HCT116 (cell line): ENCODE measurements at regions of chr18 and their contacts with region 1.

Region 1: GRCh38 chr18:47150029-47150823 is at the start of gene HDHD2:
- DNase-seq: peak; percentile 54
- ATAC-seq: peak; percentile 90
- H3K4me3 ChIP-seq: peak within 1 kb of the TSS; percentile 81 to 90
- H3K27ac ChIP-seq: peak within 1 kb of the TSS; percentile 69
- H3K4me1 ChIP-seq: peaks cover 8 to 16% of the 10 kb centered on the region in 2 experiments; a peak in 2 of 4 replicates
- H3K27me3 ChIP-seq: no peaks in the 10 kb centered on the region
- CTCF ChIP-seq: no peak
- POLR2A ChIP-seq: peak; percentile 85
- RAD21 ChIP-seq: no peak
- total RNA-seq, gene HDHD2: 29.1 TPM

Region 2: GRCh38 chr18:46859855-46860254 is 290.4 kb before region 1 on chr18:
- CTCF ChIA-PET with region 1: no interaction called
- POLR2A ChIA-PET with region 1: no interaction called
- RAD21 ChIA-PET with region 1: no interaction called
- intact Hi-C with region 1: no loop called
- DNase-seq: no peak
- ATAC-seq: no peak
- H3K4me3 ChIP-seq: no peak overlapping the region
- H3K27ac ChIP-seq: no peak overlapping the region
- H3K4me1 ChIP-seq: no peaks in the 10 kb centered on the region
- H3K27me3 ChIP-seq: no peaks in the 10 kb centered on the region
- CTCF ChIP-seq: no peak
- POLR2A ChIP-seq: no peak
- RAD21 ChIP-seq: no peak

Region 3: GRCh38 chr18:47658498-47658897 is 508.3 kb after region 1 on chr18:
- CTCF ChIA-PET with region 1: no interaction called
- POLR2A ChIA-PET with region 1: no interaction called
- RAD21 ChIA-PET with region 1: no interaction called
- intact Hi-C with region 1: no loop called
- DNase-seq: no peak
- ATAC-seq: no peak
- H3K4me3 ChIP-seq: no peak overlapping the region
- H3K27ac ChIP-seq: no peak overlapping the region
- H3K4me1 ChIP-seq: no peaks in the 10 kb centered on the region
- H3K27me3 ChIP-seq: peaks cover 2% of the 10 kb centered on the region; the same call in 1 of the 2 replicates
- CTCF ChIP-seq: 0 out of 6 replicates have a peak, but pooled peaks of 1 of the 3 experiments have one; percentile 12
- POLR2A ChIP-seq: no peak
- RAD21 ChIP-seq: no peak

Region 4: DNA sequence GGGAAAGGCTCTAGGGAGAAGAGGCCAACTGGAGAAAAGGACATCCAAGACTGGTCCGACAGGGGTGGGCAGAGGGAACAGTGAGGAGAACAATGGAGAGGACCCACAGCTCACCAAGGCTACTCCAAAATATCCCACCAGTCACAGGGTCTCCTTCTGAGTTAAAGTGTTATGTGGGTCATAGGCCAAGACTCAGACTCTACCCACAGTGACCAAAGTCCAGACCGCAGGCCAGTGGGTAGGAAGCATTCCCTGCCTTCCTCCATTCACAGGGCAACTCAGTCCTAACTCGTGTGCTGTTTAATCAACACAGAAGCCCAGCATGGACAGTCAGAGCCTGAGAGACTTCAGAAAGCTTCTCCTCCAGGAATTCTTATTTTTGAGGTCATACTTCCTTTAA is 519.6 kb after region 1 on chr18:
- CTCF ChIA-PET with region 1: no interaction called
- POLR2A ChIA-PET with region 1: no interaction called
- RAD21 ChIA-PET with region 1: no interaction called
- intact Hi-C with region 1: no loop called
- DNase-seq: no peak
- ATAC-seq: no peak
- H3K4me3 ChIP-seq: no peak overlapping the region
- H3K27ac ChIP-seq: no peak overlapping the region
- H3K4me1 ChIP-seq: no peaks in the 10 kb centered on the region
- H3K27me3 ChIP-seq: peaks cover 27% of the 10 kb centered on the region
- CTCF ChIP-seq: no peak
- POLR2A ChIP-seq: no peak
- RAD21 ChIP-seq: no peak

Region 5: DNA sequence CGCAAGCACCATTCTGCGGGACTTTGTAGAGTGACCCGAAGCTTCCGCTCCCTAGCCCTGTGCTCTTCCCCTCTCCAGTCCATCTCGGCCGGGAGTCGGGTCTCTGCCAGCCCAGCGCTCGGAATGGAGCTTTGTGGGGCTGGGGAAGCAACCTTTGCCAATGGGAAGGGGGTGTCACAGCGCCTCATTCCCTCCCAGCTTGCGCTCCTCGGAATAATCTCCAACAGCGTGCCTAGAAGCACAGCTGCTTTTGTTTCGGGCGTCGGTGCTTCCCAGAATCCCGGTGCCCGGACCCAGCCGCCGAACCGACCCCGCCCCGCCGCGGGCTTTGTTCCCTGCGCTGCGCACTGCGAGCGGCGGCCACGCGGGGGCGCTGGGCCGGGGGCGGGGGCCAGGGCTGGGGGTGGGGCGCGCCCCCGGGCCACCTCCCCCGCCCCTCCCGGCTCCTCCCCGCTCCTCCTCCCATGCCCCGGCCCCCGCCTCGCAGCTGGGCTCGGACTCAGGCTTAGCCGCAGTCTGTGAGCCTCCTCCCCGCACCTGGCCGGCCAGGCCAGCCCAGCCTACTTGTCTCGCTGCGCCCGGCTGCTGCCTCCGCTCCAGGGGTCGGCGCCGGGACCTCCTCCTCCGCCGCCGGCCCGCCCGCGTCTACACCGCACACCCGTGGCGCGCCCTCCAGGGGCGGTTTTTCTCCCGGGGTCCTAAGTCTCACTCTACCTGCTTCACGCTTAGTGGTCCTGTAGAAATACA is 857.9 kb after region 1 on chr18:
- CTCF ChIA-PET with region 1: no interaction called
- POLR2A ChIA-PET with region 1: no interaction called
- RAD21 ChIA-PET with region 1: no interaction called
- intact Hi-C with region 1: loop called (anchors 10 kb)
- DNase-seq: no peak
- ATAC-seq: peak; percentile 89
- H3K4me3 ChIP-seq: peak overlapping the region; percentile 38 to 61
- H3K27ac ChIP-seq: peak overlapping the region; percentile 8; the same call in 1 of the 2 replicates
- H3K4me1 ChIP-seq: peaks cover 31% of the 10 kb centered on the region in 2 experiments
- H3K27me3 ChIP-seq: no peaks in the 10 kb centered on the region
- CTCF ChIP-seq: peak in 2 of 3 experiments; percentile 41 to 48; a peak in 4 of 6 replicates
- POLR2A ChIP-seq: no peak
- RAD21 ChIP-seq: no peak